ENCODE measurements at regions of chr12 and their contacts with region 1.

Region 1: GRCh38 chr12:88897723-88898122 is 317.5 kb upstream of the KITLG start:
- DNase-seq: no peak
- ATAC-seq: no peak

Region 2: DNA sequence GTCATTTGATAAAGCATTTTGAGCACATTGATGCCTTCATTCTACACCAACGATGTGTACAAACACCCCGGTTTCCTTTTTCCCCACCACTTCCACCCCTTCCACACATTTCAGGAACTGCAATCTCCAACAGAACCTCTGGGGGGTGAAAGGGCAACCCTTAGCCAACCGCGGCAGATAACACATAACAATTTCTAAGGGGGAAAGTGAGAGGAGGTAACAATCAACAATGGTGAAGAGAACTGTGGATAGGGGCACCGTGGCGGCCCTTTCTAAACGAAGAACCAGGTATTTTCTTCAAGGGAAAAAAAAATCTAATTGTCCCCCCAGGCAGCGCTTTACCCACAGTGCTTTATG is 318.6 kb before region 1 on chr12:
- intact Hi-C with region 1: loop called (anchors 5 kb)
- DNase-seq: no peak
- ATAC-seq: no peak

Region 3: DNA sequence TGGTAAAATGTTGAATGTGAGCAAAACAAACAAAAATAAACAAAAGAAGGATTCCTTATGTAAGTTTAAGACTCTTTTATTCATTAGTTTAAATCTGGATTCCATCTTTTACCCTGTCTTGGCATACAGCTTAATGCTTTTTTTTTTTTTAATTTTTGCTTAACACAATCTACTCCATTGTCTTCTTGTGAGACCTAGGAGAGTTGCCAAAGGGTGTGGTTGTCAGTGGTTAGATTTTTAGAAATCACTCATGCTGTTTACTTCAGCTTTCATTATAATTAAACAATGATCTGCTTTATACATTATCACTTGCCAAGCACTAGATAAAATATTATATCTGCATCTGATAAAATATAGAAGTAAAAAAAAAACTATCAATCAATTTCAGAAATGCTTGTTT is 239.7 kb before region 1 on chr12:
- intact Hi-C with region 1: loop called (anchors 5 kb)
- DNase-seq: no peak
- ATAC-seq: peak; percentile 52

Region 4: GRCh38 chr12:88753066-88753465 is 144.7 kb before region 1 on chr12:
- intact Hi-C with region 1: loop called (anchors 5 kb)
- DNase-seq: no peak
- ATAC-seq: no peak

Region 5: DNA sequence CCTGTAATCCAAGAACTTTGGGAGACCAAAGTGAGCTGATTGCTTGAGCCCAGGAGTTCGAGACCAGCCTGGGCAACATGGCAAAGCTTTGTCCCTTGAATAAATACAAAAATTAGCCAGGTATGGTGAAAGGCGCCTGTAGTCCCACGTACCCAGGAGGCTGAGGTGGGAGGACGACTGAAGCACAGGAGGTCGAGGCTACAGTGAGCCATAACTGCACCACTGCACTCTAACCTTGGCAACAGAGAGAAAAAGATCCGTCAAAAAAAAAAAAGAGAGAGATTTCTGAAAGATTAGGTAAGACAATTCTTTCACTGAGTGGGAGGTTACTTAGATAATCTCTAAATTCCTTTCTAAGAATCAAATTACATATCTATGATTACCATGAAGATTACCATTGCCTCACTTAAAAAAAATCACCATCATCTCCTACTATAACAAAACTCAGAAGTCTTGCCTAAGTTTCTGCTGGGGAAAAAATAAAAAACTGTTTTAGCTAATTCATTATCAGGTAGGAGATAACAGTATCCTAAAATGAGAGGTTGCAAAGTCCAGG is 87.8 kb after region 1 on chr12:
- intact Hi-C with region 1: loop called (anchors 10 kb)
- DNase-seq: no peak
- ATAC-seq: no peak

Region 6: GRCh38 chr12:89373763-89374572 is 476.2 kb after region 1 on chr12:
- intact Hi-C with region 1: no loop called
- DNase-seq: no peak
- ATAC-seq: peak; percentile 81

Measured in Right ventricle myocardium inferior (tissue), 1 donor.